Astrocyte of the cerebellum (primary cell): ENCODE measurements at regions of chr16 and their contacts with region 1.

Region 1: DNA sequence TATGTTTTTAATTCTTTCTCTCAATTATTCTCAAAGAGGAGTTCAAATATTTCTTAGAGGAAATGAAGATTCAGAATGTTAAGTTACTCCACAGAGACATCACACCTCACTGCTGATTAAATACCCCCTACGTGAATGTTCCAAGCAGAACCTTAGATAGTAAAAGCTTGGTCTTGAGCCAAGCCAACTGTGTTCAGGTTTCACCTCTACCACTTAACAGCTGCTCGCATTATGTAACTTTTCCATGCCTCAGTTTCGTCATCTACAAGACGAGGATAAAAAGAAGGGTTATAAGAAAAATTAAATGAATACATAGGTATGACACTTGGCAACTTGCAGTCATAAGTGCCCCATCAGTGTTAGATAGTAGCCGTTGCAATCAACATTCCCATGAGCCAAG is 356.2 kb downstream of the RBFOX1 start:
- DNase-seq: no peak
- H3K4me3 ChIP-seq: no peak overlapping the region
- CTCF ChIP-seq: no peak

Region 2: GRCh38 chr16:7629571-7629970 is 59.2 kb before region 1 on chr16:
- in situ Hi-C with region 1: no loop called
- DNase-seq: no peak
- H3K4me3 ChIP-seq: no peak overlapping the region
- CTCF ChIP-seq: no peak

Region 3: GRCh38 chr16:7722761-7723160 is 34.0 kb after region 1 on chr16:
- in situ Hi-C with region 1: no loop called
- DNase-seq: no peak
- H3K4me3 ChIP-seq: no peak overlapping the region
- CTCF ChIP-seq: no peak

Region 4: GRCh38 chr16:7744546-7745264 is 55.9 kb after region 1 on chr16:
- in situ Hi-C with region 1: loop called (anchors 5 kb)
- DNase-seq: no peak
- H3K4me3 ChIP-seq: no peak overlapping the region
- CTCF ChIP-seq: no peak